Heart left ventricle (tissue), 16 donors: ENCODE measurements at regions of chr4 and their contacts with region 1.

Region 1: DNA sequence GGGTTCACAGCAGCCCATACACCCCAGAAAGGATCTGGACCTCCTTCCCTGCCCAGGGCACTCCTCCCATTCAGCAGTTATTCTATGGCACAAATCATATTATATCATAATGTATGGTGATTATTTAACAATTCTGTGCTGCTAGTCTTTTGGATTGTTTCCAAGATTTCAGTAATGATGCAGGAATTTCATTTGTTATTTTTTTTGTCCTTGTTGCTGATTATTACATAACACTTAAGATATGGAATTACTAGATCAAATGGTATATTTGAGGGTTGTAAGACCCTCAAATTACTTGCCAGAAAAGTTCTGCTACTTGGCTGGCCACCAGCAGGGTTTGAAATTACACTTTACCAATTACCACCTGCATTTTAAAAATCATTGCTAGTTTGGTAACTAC is 36.4 kb downstream of the QDPR start:
- DNase-seq: no peak
- ATAC-seq: no peak
- H3K4me3 ChIP-seq: no peak overlapping the region
- H3K27ac ChIP-seq: no peak overlapping the region
- H3K4me1 ChIP-seq: peaks cover 0 to 4% (median 0%) of the 10 kb centered on the region in 12 donors
- H3K27me3 ChIP-seq: no peaks in the 10 kb centered on the region
- CTCF ChIP-seq: no peak
- POLR2A ChIP-seq: no peak

Region 2: GRCh38 chr4:17356926-17357325 is 118.6 kb before region 1 on chr4:
- intact Hi-C with region 1: loop called in 2 of 10 experiments (anchors 5 to 10 kb)
- DNase-seq: no peak
- ATAC-seq: no peak
- H3K4me3 ChIP-seq: no peak overlapping the region
- H3K27ac ChIP-seq: no peak overlapping the region
- H3K4me1 ChIP-seq: no peaks in the 10 kb centered on the region
- H3K27me3 ChIP-seq: peaks cover 0 to 7% (median 0%) of the 10 kb centered on the region in 9 donors
- CTCF ChIP-seq: no peak
- POLR2A ChIP-seq: no peak

Region 3: GRCh38 chr4:17511950-17512795 is 36.7 kb after region 1 on chr4 and contains the start of gene QDPR:
- intact Hi-C with region 1: no loop called
- DNase-seq: peak; percentile 84 to 93 (median 88)
- ATAC-seq: peak; percentile 89 to 97 (median 96)
- H3K4me3 ChIP-seq: peak within 1 kb of the TSS; percentile 69 to 92 (median 82)
- H3K27ac ChIP-seq: peak within 1 kb of the TSS; percentile 9 to 84 (median 78)
- H3K4me1 ChIP-seq: peaks cover 0 to 21% (median 18%) of the 10 kb centered on the region in 12 donors
- H3K27me3 ChIP-seq: peaks cover 0 to 2% (median 0%) of the 10 kb centered on the region in 9 donors
- CTCF ChIP-seq: peak in 10 of 12 donors; percentile 20 to 76 (median 48)
- POLR2A ChIP-seq: no peak
- total RNA-seq, gene QDPR: 22.7 to 66.2 (median 42.5) TPM

Region 4: DNA sequence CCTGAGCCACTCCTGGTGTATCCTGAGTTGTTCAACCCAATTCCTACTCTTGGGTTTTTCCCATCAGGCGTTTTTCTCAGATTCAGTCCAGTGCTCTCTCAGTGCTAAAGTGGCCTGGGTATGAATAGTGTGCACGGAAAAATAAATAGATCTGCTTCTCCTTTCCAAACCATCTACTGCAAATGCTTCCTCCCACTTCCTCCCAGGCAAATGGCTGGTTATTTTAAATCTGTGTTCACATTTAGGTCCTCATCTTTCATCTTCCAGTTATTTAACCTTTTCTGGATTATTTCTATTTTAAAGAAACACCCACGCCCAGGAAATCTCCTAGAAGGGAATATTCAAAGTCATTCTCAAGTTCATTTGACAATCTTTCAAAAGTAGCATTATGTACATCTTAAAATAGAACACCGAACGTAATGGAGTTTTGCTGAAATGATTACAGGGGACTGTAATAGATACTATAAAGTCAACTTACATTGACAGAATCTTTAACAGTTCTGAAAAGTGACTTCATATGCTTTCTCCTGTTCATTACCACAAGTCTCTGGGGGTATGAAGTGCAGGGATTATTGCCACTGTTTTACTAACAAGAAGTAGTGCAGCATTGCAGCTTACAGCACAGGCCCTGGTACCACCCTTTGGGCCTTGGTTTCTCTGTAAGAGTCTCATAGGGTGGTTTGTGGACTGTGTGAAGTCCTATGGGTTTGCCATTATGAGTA is 205.2 kb after region 1 on chr4:
- intact Hi-C with region 1: no loop called
- DNase-seq: no peak
- ATAC-seq: peak in 1 of 4 donors; percentile 20
- H3K4me3 ChIP-seq: no peak overlapping the region
- H3K27ac ChIP-seq: no peak overlapping the region
- H3K4me1 ChIP-seq: no peaks in the 10 kb centered on the region
- H3K27me3 ChIP-seq: no peaks in the 10 kb centered on the region
- CTCF ChIP-seq: no peak
- POLR2A ChIP-seq: no peak